ENCODE measurements at regions of chr9 and their contacts with region 1.

Region 1: GRCh38 chr9:4306066-4306775 is 6.4 kb upstream of the GLIS3 start:
- DNase-seq: no peak
- ATAC-seq: no peak
- H3K4me3 ChIP-seq: no peak overlapping the region
- H3K27ac ChIP-seq: no peak overlapping the region
- H3K4me1 ChIP-seq: peaks cover 0 to 15% (median 0%) of the 10 kb centered on the region in 12 donors
- H3K27me3 ChIP-seq: no peaks in the 10 kb centered on the region
- CTCF ChIP-seq: no peak
- POLR2A ChIP-seq: no peak

Region 2: GRCh38 chr9:4243877-4244820 is 62.1 kb before region 1 on chr9:
- intact Hi-C with region 1: no loop called
- DNase-seq: no peak
- ATAC-seq: peak in 2 of 4 donors; percentile 22 to 47
- H3K4me3 ChIP-seq: no peak overlapping the region
- H3K27ac ChIP-seq: no peak overlapping the region
- H3K4me1 ChIP-seq: peaks cover 0 to 9% (median 0%) of the 10 kb centered on the region in 12 donors
- H3K27me3 ChIP-seq: no peaks in the 10 kb centered on the region
- CTCF ChIP-seq: no peak
- POLR2A ChIP-seq: no peak

Region 3: GRCh38 chr9:4344946-4345345 is 38.7 kb after region 1 on chr9:
- intact Hi-C with region 1: loop called in 1 of 10 experiments (anchors 5 kb)
- DNase-seq: no peak
- ATAC-seq: no peak
- H3K4me3 ChIP-seq: no peak overlapping the region
- H3K27ac ChIP-seq: no peak overlapping the region
- H3K4me1 ChIP-seq: no peaks in the 10 kb centered on the region
- H3K27me3 ChIP-seq: no peaks in the 10 kb centered on the region
- CTCF ChIP-seq: no peak
- POLR2A ChIP-seq: no peak

Region 4: DNA sequence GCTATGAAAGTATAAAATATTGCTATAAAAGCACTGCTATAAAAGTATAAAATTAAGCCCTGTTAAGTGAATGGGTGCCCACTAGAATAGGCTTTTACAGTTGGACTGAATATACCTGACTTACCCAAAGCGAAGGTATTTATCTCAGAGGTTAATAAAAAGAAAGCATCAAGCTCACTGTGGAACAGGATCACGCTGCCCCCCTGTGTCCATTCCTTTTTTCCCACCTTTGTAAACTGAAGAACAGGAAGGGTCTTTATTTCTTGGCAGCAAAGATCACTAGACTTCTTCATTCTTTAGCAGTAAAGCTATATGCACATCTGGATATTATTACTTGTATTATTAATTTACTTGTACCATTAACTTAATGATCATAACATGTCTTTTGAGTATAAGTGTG is 333.8 kb after region 1 on chr9:
- intact Hi-C with region 1: loop called in 1 of 10 experiments (anchors 5 kb)
- DNase-seq: no peak
- ATAC-seq: no peak
- H3K4me3 ChIP-seq: no peak overlapping the region
- H3K27ac ChIP-seq: no peak overlapping the region
- H3K4me1 ChIP-seq: no peaks in the 10 kb centered on the region
- H3K27me3 ChIP-seq: no peaks in the 10 kb centered on the region
- CTCF ChIP-seq: peak; percentile 33 to 61 (median 49)
- POLR2A ChIP-seq: no peak

Measured in heart left ventricle (tissue), 16 donors.